ENCODE measurements at regions of chr12 and their contacts with region 1.

Region 1: DNA sequence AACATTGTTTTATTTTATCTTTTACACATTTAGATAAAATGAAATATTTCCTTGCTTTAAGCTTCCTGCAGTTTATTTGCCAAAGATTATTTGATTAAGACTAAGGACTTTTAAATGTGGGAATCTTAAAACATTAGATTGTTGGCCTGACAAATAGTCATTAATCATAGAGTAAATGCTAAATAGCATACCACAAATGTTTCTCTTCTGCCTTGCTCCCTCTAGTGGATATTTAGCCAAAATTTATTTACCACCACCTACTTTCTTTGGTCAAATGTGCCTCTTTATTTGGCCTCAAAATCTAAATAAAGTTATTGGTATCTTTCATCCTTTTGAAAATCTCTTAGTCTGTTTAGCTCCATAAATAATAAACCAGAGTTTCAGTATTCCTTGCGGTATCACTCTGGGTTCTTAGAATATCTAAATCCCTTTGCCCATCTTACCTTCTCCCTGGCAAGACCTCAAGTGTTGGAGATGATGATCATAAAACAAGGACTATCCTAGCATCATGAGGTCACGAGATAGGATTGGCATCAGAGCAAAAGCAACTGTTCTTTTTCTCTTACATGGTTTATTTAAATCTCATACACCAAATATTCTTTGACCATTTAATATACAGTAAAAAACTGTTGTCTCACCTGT is 150.6 kb upstream of the AEBP2 start:
- DNase-seq: peak in 2 of 9 experiments; percentile 27 to 45
- ATAC-seq: no peak
- H3K4me3 ChIP-seq: no peak overlapping the region
- H3K4me3 Mint-ChIP-seq: no peak overlapping the region
- H3K27ac ChIP-seq: no peak overlapping the region
- H3K27ac Mint-ChIP-seq: no peak overlapping the region
- H3K4me1 ChIP-seq: no peaks in the 10 kb centered on the region
- H3K4me1 Mint-ChIP-seq: no peaks in the 10 kb centered on the region
- H3K27me3 ChIP-seq: no peaks in the 10 kb centered on the region
- H3K27me3 Mint-ChIP-seq: no peaks in the 10 kb centered on the region
- CTCF ChIP-seq: peak; percentile 80

Region 2: GRCh38 chr12:18794000-18794399 is 494.7 kb before region 1 on chr12:
- CTCF ChIA-PET with region 1: no interaction called
- POLR2A ChIA-PET with region 1: no interaction called
- intact Hi-C with region 1: no loop called
- DNase-seq: no peak
- ATAC-seq: no peak
- H3K4me3 ChIP-seq: no peak overlapping the region
- H3K4me3 Mint-ChIP-seq: no peak overlapping the region
- H3K27ac ChIP-seq: no peak overlapping the region
- H3K27ac Mint-ChIP-seq: no peak overlapping the region
- H3K4me1 ChIP-seq: no peaks in the 10 kb centered on the region
- H3K4me1 Mint-ChIP-seq: no peaks in the 10 kb centered on the region
- H3K27me3 ChIP-seq: no peaks in the 10 kb centered on the region
- H3K27me3 Mint-ChIP-seq: no peaks in the 10 kb centered on the region
- CTCF ChIP-seq: no peak

Region 3: DNA sequence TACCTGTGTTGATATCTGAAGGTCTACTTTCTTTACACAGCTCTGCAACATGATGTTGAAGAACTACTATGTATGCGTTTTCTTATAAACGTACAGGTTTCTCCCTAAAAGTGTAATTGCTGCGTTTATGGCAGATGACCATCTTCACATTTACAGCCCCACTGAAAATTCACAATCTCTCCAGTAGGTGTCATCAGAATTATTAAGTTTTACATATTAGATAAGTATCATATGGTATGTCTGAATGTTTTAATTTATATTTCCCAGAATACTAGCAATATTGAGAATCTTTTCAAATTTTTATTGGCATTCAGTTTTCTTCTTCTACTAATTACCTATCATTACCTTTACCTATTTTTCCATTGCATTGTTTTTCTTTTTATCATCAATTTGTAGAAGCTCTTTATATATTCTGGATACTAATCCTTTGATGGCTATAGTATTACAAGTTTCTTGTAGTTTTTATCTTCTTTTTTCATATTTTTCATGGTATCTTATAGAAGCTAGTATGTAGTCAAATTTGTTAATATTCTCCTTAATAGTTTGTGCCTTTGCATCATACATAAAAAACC is 427.4 kb before region 1 on chr12:
- CTCF ChIA-PET with region 1: no interaction called
- POLR2A ChIA-PET with region 1: no interaction called
- intact Hi-C with region 1: loop called in 1 of 2 experiments (anchors 5 kb)
- DNase-seq: peak in 2 of 9 experiments; percentile 13 to 27
- ATAC-seq: no peak
- H3K4me3 ChIP-seq: no peak overlapping the region
- H3K4me3 Mint-ChIP-seq: no peak overlapping the region
- H3K27ac ChIP-seq: no peak overlapping the region
- H3K27ac Mint-ChIP-seq: no peak overlapping the region
- H3K4me1 ChIP-seq: no peaks in the 10 kb centered on the region
- H3K4me1 Mint-ChIP-seq: no peaks in the 10 kb centered on the region
- H3K27me3 ChIP-seq: no peaks in the 10 kb centered on the region
- H3K27me3 Mint-ChIP-seq: peaks cover 3% of the 10 kb centered on the region
- CTCF ChIP-seq: peak; percentile 27

Region 4: GRCh38 chr12:19181666-19182426 is 106.9 kb before region 1 on chr12:
- CTCF ChIA-PET with region 1: interaction called, 4 read pairs
- POLR2A ChIA-PET with region 1: no interaction called
- intact Hi-C with region 1: loop called (anchors 1 to 2 kb)
- DNase-seq: peak in 1 of 9 experiments; percentile 11
- ATAC-seq: no peak
- H3K4me3 ChIP-seq: no peak overlapping the region
- H3K4me3 Mint-ChIP-seq: no peak overlapping the region
- H3K27ac ChIP-seq: no peak overlapping the region
- H3K27ac Mint-ChIP-seq: no peak overlapping the region
- H3K4me1 ChIP-seq: no peaks in the 10 kb centered on the region
- H3K4me1 Mint-ChIP-seq: no peaks in the 10 kb centered on the region
- H3K27me3 ChIP-seq: no peaks in the 10 kb centered on the region
- H3K27me3 Mint-ChIP-seq: no peaks in the 10 kb centered on the region
- CTCF ChIP-seq: no peak

Region 5: GRCh38 chr12:19338405-19338804 is 49.7 kb after region 1 on chr12:
- CTCF ChIA-PET with region 1: no interaction called
- POLR2A ChIA-PET with region 1: no interaction called
- intact Hi-C with region 1: no loop called
- DNase-seq: no peak
- ATAC-seq: no peak
- H3K4me3 ChIP-seq: no peak overlapping the region
- H3K4me3 Mint-ChIP-seq: no peak overlapping the region
- H3K27ac ChIP-seq: no peak overlapping the region
- H3K27ac Mint-ChIP-seq: no peak overlapping the region
- H3K4me1 ChIP-seq: no peaks in the 10 kb centered on the region
- H3K4me1 Mint-ChIP-seq: no peaks in the 10 kb centered on the region
- H3K27me3 ChIP-seq: no peaks in the 10 kb centered on the region
- H3K27me3 Mint-ChIP-seq: no peaks in the 10 kb centered on the region
- CTCF ChIP-seq: no peak